ENCODE measurements at regions of chr1 and their contacts with region 1.

Region 1: DNA sequence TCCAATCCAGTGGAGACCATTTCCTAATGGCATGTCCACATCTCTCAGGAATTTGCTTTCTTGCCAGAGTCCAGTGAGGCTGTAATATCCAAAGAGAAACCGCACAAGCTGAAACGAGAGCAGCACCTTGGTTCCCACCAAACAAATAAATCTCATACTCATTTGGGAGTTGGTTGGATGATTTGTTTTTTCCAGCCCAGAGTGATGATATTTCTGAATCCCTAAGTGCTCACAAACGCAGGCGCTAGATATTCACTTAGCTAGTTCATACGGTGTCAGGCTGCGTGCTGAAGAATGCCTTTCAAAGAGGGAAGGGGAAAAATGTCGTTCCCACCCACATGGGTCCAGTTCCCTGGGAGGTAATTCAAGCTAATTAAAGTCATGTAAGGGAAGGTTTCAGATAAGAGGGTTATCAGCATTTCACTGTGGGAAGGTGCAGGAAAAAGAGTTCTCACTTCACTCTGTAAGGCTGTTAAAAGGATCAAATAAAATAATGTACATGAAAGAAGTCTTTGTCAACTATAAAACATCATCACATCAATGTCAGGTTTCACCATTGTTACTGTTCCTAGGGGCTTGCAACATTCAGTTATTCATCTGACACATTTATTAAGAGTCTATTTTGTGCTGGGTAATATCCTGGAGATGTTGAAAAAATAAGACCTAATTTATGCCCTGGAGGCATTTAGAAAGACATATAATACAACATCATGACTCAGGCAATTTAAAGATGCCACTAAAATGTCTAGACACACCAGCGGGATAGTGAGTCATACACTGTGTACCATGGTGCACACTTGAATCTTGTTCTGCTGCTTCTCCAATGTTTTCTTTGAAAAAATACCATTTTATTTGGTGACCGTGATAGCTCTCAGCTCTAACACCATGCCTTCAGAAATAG is 19.4 kb downstream of the DPT start:
- DNase-seq: peak; percentile 46

Region 2: DNA sequence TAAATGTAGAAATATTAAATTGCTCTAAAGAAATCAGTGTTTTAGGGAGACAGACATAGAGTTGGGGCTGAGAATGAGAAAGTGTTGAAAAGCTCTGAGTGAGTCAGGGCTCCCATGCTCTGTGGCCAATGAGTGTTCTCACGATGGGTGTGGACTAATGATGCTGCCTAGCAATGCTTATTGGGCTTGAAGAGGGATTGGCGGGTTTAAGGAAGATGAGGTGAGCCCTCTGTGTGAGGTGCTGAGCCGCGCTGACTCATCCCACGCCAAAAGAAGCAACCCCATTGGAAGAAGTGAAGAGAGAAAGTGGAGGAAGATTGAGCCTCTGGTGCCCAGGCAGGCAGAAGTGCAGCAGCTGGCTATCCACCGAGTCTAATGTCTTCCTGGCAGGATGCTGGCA is 84.4 kb after region 1 on chr1:
- CTCF ChIA-PET with region 1: no interaction called
- POLR2A ChIA-PET with region 1: no interaction called
- DNase-seq: no peak

Region 3: GRCh38 chr1:169260478-169261151 is 551.0 kb after region 1 on chr1:
- CTCF ChIA-PET with region 1: interaction called, 11 read pairs
- POLR2A ChIA-PET with region 1: no interaction called
- DNase-seq: no peak